OCI-LY7 (cell line): ENCODE measurements at regions of chr4 and their contacts with region 1.

Region 1: GRCh38 chr4:108650212-108651013 is at the start of gene OSTC:
- DNase-seq: peak; percentile 96
- H3K4me3 ChIP-seq: peak within 1 kb of the TSS; percentile 77
- H3K27ac ChIP-seq: peak within 1 kb of the TSS; percentile 54
- H3K4me1 ChIP-seq: peaks cover 14% of the 10 kb centered on the region
- CTCF ChIP-seq: 0 out of 2 replicates have a peak, but pooled peaks have one; percentile 11
- total RNA-seq, gene OSTC: 65.8 and 78.4 TPM in 2 replicates

Region 2: DNA sequence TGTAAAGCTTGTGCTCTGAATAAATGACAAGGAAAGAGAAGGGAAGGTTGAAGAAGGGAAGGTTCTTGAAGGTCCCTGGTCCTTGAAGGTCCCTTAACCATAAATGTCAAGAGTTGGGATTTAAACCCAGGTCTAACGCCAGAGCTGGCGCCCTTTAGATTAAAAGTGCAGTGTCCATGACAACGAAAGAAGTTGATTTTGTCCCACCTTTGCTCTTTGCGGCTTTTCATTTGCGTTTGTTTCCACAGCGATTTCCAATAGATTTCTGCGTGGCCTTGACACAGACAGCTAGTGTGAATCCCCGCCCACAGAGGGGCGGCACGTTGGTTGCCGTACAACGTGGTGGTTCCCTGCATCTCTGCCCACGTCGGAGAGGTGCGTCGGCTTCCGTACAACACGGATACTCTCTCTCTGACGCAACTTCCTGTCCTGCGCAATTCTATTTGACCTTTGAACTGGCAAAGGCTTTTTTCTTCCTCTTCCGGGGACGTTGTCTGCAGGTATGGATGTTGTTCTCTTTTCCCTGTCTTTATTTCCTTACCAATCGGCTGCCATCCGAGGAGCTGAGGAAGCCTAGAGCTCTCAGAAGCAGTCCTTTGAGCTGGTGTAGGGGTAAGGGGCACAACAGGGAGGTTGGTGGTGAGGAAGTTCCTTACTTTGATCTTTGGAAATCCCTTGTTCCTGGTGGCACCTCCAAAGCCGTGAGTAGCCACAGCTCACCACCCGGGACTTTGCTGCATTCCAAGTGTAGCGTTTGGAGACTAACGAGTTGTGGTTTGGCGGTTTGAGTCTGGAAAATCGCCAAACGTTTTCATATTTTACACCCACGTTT is 30.1 kb before region 1 on chr4 and contains the start of gene RPL34:
- CTCF ChIA-PET with region 1: no interaction called
- POLR2A ChIA-PET with region 1: interaction called, 12 read pairs
- intact Hi-C with region 1: loop called (anchors 2 kb)
- DNase-seq: peak; percentile 98
- H3K4me3 ChIP-seq: peak within 1 kb of the TSS; percentile 90
- H3K27ac ChIP-seq: peak within 1 kb of the TSS; percentile 29
- H3K4me1 ChIP-seq: peaks cover 45% of the 10 kb centered on the region
- CTCF ChIP-seq: no peak
- total RNA-seq, gene RPL34: 1,304 and 1,342 TPM in 2 replicates

Region 3: GRCh38 chr4:108662629-108663028 is 12.2 kb after region 1 on chr4:
- CTCF ChIA-PET with region 1: interaction called, 3 read pairs
- POLR2A ChIA-PET with region 1: interaction called, 12 read pairs
- intact Hi-C with region 1: no loop called
- DNase-seq: no peak
- H3K4me3 ChIP-seq: no peak overlapping the region
- H3K27ac ChIP-seq: no peak overlapping the region
- H3K4me1 ChIP-seq: no peaks in the 10 kb centered on the region
- CTCF ChIP-seq: no peak

Region 4: DNA sequence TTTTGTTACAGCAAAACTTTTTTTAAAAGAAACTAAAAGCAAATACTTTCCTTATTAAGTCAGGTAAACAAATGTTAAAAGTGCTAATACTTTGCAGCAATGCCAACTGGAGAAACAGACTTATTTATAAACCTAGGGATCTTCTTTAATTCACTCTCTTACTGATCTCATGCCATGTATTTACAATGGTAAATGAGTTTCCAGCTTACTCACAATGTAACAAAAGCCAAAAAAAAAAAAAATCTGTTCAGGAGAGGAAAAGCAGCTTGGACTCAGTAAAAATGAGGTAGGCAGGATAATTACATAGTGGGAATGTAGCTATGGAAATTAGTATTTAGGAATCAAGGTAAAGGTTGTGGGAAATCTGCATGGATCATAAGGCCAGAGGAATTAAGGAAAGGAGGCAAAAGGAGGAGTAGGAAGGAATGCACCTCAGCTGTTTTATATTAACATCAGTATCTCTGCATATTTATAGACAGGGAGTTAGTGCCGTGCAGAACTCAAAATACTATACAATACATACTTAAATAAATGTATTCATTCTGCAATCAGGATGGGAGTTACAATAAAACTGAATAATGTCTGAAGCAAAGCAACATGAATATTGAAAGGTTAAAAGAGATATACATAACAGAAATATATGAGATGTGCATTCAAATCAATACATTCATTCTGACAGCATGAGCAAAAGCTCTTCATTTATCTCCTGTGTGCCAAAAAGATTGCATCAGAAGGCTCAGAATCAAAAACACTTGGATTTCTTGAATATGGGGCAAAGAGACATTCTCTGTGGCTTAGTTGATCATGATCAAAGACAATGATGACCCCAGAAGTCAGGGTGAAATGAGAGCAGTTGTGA is 170.3 kb after region 1 on chr4:
- CTCF ChIA-PET with region 1: no interaction called
- POLR2A ChIA-PET with region 1: no interaction called
- intact Hi-C with region 1: no loop called
- DNase-seq: no peak
- H3K4me3 ChIP-seq: no peak overlapping the region
- H3K27ac ChIP-seq: no peak overlapping the region
- H3K4me1 ChIP-seq: no peaks in the 10 kb centered on the region
- CTCF ChIP-seq: no peak